Heart right ventricle (tissue), 16 donors: ENCODE measurements at regions of chr19 and their contacts with region 1.

Region 1: DNA sequence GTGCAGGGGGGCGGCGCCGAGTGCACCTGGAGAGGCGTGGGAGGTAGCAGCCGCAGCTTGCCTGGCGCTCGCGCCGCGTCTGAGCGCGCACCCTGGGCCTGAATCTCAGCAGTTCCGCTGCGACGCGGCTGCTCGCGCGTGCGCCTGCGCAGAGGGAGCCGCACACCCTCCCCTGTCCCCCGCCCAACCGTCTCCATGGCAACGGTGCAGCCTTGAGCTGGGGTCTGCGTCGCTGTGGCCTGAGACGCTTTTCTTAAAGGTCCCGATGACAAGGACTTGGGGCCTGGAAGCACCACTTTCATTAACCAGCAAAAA is at the start of gene PNMA8B:
- DNase-seq: peak; percentile 58 to 72
- ATAC-seq: peak; percentile 32 to 73 (median 54)
- H3K4me3 ChIP-seq: peak within 1 kb of the TSS in 9 of 10 donors; percentile 7 to 51 (median 46)
- H3K27ac ChIP-seq: peak within 1 kb of the TSS in 2 of 10 donors; percentile 48 to 50
- H3K4me1 ChIP-seq: peaks cover 5 to 40% (median 19%) of the 10 kb centered on the region in 9 donors
- H3K27me3 ChIP-seq: peaks cover 0 to 53% (median 37%) of the 10 kb centered on the region in 7 donors
- CTCF ChIP-seq: no peak
- total RNA-seq, gene PNMA8B: 0.47 to 0.95 (median 0.65) TPM

Region 2: DNA sequence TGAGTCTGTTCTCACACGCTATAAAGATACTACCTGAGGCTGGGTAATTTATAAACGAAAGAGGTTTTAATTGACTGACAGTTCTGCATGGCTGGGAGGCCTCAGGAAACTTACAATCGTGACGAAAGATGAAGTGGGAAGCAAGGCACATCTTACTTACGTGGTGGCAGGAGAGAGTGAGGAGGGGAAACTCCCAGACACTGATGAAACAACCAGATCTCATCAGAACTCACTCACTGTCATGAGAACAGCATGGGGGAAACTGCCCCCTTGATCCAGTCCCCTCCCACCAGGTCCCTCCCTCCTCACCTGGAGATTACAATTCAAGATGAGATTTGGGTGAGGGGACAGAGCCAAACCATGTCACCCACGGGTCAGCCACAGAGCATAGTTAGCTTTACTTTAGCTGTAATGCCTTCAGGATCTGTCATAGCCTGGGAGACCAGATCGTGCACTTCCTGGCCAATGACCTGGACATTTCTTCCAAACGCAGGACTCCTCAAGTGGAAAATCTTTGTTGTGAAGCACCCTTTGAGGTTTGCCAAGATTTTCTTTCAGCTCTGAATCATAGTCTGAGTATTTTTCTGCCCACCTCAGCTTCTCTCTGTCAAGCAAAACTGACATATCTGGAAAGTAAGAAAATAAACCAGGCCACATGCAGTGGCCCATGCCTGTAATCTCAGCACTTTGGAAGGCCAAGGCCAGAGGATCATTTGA is 224.1 kb before region 1 on chr19:
- intact Hi-C with region 1: loop called in 1 of 10 experiments (anchors 10 kb)
- DNase-seq: no peak
- ATAC-seq: no peak
- H3K4me3 ChIP-seq: no peak overlapping the region
- H3K27ac ChIP-seq: no peak overlapping the region
- H3K4me1 ChIP-seq: no peaks in the 10 kb centered on the region
- H3K27me3 ChIP-seq: peaks cover 0 to 54% (median 29%) of the 10 kb centered on the region in 7 donors
- CTCF ChIP-seq: no peak